Mammary epithelial cell (primary cell): ENCODE measurements at regions of chr22 and their contacts with region 1.

Region 1: GRCh38 chr22:46432164-46433068 is 96.9 kb downstream of the TRMU start:
- DNase-seq: no peak
- H3K4me3 ChIP-seq: no peak overlapping the region
- H3K27ac ChIP-seq: no peak overlapping the region
- H3K4me1 ChIP-seq: peaks cover 4% of the 10 kb centered on the region
- H3K27me3 ChIP-seq: no peaks in the 10 kb centered on the region
- CTCF ChIP-seq: no peak

Region 2: GRCh38 chr22:46390652-46391301 is 41.6 kb before region 1 on chr22:
- CTCF ChIA-PET with region 1: no interaction called
- dilution Hi-C with region 1: no loop called
- in situ Hi-C with region 1: no loop called
- intact Hi-C with region 1: no loop called
- DNase-seq: peak; percentile 70
- H3K4me3 ChIP-seq: no peak overlapping the region
- H3K27ac ChIP-seq: no peak overlapping the region
- H3K4me1 ChIP-seq: no peaks in the 10 kb centered on the region
- H3K27me3 ChIP-seq: no peaks in the 10 kb centered on the region
- CTCF ChIP-seq: no peak

Region 3: GRCh38 chr22:46484861-46485595 is 52.6 kb after region 1 on chr22:
- CTCF ChIA-PET with region 1: no interaction called
- dilution Hi-C with region 1: no loop called
- in situ Hi-C with region 1: no loop called
- intact Hi-C with region 1: no loop called
- DNase-seq: no peak
- H3K4me3 ChIP-seq: no peak overlapping the region
- H3K27ac ChIP-seq: no peak overlapping the region
- H3K4me1 ChIP-seq: peaks cover 9% of the 10 kb centered on the region
- H3K27me3 ChIP-seq: no peaks in the 10 kb centered on the region
- CTCF ChIP-seq: no peak

Region 4: GRCh38 chr22:46528121-46528610 is 95.8 kb after region 1 on chr22:
- CTCF ChIA-PET with region 1: interaction called, 3 read pairs
- dilution Hi-C with region 1: loop called (anchors 5 kb)
- in situ Hi-C with region 1: no loop called
- intact Hi-C with region 1: no loop called
- DNase-seq: peak; percentile 96
- H3K4me3 ChIP-seq: no peak overlapping the region
- H3K27ac ChIP-seq: peak overlapping the region; percentile 47
- H3K4me1 ChIP-seq: peaks cover 55% of the 10 kb centered on the region
- H3K27me3 ChIP-seq: no peaks in the 10 kb centered on the region
- CTCF ChIP-seq: no peak